ENCODE measurements at regions of chr17 and their contacts with region 1.

Region 1: DNA sequence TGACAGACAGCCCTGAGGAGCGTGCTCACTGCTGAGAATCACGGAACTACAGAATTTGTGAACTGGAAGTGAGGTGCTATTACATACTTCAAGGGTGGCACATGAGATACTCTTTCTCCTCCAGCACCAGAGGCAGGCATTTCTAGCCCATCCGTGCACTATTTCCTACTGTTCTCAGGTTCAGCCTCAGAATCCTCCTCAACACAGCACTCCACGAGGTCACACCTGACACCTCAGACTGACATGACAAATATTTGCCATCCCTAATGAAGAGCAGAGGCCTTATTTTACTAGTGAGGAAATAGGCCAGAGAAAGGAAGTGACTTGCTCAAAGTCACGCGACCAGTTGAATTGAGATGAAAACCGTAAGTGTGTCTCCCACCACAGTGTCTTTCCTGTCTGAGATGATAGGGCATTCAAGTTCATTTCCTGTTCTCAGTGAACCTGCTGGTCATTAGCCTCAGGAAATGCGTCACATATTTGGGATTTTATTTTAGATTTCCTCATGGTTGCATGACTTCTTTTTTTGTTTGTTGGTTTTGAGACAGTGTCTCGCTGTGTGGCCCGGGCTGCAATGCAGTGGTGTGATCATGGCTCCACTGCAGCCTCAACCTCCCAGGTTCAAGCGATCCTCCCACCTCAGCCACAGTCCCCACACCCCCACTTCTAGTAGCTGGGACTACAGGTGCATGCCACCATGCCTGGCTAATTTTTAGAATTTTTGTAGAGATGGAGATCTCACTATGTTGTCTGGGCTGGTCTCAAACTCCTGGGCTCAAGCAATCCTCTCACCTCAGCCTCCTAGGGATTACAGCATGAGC is 23.5 kb downstream of the SEZ6 start:
- DNase-seq: no peak
- ATAC-seq: no peak
- H3K4me3 Mint-ChIP-seq: no peak overlapping the region
- H3K27ac Mint-ChIP-seq: no peak overlapping the region
- H3K4me1 Mint-ChIP-seq: peaks cover 36% of the 10 kb centered on the region
- H3K27me3 Mint-ChIP-seq: peaks cover 54% of the 10 kb centered on the region
- CTCF ChIP-seq: no peak

Region 2: GRCh38 chr17:29084541-29085146 is 102.3 kb after region 1 on chr17:
- CTCF ChIA-PET with region 1: interaction called, 20 read pairs
- POLR2A ChIA-PET with region 1: no interaction called
- DNase-seq: no peak
- ATAC-seq: peak; percentile 19
- H3K4me3 Mint-ChIP-seq: no peak overlapping the region
- H3K27ac Mint-ChIP-seq: peak overlapping the region; percentile 5; the same call in 1 of the 2 replicates
- H3K4me1 Mint-ChIP-seq: peaks cover 43% of the 10 kb centered on the region
- H3K27me3 Mint-ChIP-seq: no peaks in the 10 kb centered on the region
- CTCF ChIP-seq: no peak